Left ventricle myocardium inferior (tissue), 1 donor: ENCODE measurements at regions of chr10 and their contacts with region 1.

Region 1: DNA sequence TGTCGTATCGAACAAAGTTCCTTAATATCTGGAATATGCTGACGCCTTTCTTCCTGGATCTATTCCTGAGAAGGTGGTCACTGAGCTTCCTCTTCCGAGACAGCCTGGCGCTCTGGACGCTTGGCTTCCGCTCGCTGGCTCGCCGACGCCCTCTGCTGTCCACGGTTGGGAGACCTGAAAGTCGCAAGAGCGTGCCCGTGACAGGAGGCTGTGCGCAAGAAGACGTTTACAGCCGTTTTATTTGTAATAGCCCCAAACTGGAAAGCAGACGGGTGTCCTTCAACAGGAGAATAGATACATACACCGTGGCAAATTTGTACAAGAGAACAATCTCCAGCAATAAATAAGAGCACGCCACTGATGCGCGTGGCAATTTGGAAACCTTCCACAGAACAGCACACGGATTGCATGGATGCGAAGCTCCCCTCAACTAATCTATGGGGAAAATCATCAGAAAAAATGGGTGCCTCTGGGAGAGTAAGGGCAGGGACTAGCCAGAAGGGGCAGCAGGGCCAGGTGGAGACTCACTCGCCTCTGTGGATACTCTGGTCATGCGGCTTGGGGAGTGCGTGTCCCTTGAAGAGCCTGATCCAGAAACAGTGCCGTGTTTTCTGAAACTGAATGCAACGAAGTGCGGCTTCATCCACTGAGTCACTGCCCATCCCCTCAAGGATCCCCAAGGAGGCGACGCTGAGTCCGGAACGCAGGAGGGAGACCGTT is 41.5 kb upstream of the BNIP3 start:
- DNase-seq: peak; percentile 82
- H3K4me3 ChIP-seq: peak overlapping the region; percentile 59
- H3K27ac ChIP-seq: no peak overlapping the region
- H3K4me1 ChIP-seq: peaks cover 13% of the 10 kb centered on the region
- H3K27me3 ChIP-seq: peaks cover 52% of the 10 kb centered on the region
- CTCF ChIP-seq: peak; percentile 93

Region 2: GRCh38 chr10:131885391-131886161 is 137.7 kb before region 1 on chr10:
- intact Hi-C with region 1: loop called (anchors 5 kb)
- DNase-seq: peak; percentile 74
- H3K4me3 ChIP-seq: no peak overlapping the region
- H3K27ac ChIP-seq: no peak overlapping the region
- H3K4me1 ChIP-seq: peaks cover 8% of the 10 kb centered on the region
- H3K27me3 ChIP-seq: peaks cover 36% of the 10 kb centered on the region
- CTCF ChIP-seq: peak; percentile 96

Region 3: GRCh38 chr10:132132421-132132841 is 109.2 kb after region 1 on chr10:
- intact Hi-C with region 1: no loop called
- DNase-seq: peak; percentile 8
- H3K4me3 ChIP-seq: no peak overlapping the region
- H3K27ac ChIP-seq: no peak overlapping the region
- H3K4me1 ChIP-seq: no peaks in the 10 kb centered on the region
- H3K27me3 ChIP-seq: peaks cover 13% of the 10 kb centered on the region
- CTCF ChIP-seq: no peak